ENCODE measurements at regions of chr2 and their contacts with region 1.

Region 1: GRCh38 chr2:208718828-208719227 is 312.2 kb downstream of the PTH2R start:
- DNase-seq: no peak

Region 2: DNA sequence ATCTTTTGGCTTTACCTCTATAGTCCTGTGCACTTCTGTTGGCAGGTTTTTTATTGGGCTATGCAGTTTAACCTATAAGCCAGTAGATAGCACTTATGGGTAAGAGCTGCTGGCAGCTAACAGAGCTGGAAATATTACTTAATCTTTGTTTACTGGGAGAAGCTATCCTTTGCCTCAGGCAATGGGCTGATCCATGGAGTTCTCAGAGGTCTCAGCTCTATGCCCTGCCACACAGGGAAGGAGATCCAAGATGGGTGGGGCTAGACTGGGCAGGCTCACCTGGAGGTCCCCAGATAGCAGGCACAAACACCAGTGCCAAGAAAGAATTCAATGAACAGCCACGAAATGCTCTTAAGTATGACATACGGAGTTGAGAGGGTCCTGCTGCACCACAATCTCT is 19.7 kb after region 1 on chr2:
- intact Hi-C with region 1: loop called in 1 of 2 experiments (anchors 1 kb)
- DNase-seq: no peak